ENCODE measurements at regions of chr2 and their contacts with region 1.

Region 1: GRCh38 chr2:198127627-198128026 is 323.2 kb downstream of the PLCL1 start:
- DNase-seq: peak; percentile 42
- CTCF ChIP-seq: peak; percentile 73

Region 2: GRCh38 chr2:197804049-197804757 is 323.4 kb before region 1 on chr2 and contains the start of gene PLCL1:
- CTCF ChIA-PET with region 1: interaction called, 19 read pairs
- POLR2A ChIA-PET with region 1: no interaction called
- DNase-seq: peak; percentile 91
- CTCF ChIP-seq: no peak

Region 3: GRCh38 chr2:197851451-197851850 is 276.2 kb before region 1 on chr2:
- CTCF ChIA-PET with region 1: interaction called, 63 read pairs
- POLR2A ChIA-PET with region 1: no interaction called
- DNase-seq: peak; percentile 18
- CTCF ChIP-seq: peak; percentile 30

Region 4: GRCh38 chr2:198116756-198117155 is 10.9 kb before region 1 on chr2:
- CTCF ChIA-PET with region 1: interaction called, 12 read pairs
- POLR2A ChIA-PET with region 1: no interaction called
- DNase-seq: no peak
- CTCF ChIP-seq: no peak

Region 5: DNA sequence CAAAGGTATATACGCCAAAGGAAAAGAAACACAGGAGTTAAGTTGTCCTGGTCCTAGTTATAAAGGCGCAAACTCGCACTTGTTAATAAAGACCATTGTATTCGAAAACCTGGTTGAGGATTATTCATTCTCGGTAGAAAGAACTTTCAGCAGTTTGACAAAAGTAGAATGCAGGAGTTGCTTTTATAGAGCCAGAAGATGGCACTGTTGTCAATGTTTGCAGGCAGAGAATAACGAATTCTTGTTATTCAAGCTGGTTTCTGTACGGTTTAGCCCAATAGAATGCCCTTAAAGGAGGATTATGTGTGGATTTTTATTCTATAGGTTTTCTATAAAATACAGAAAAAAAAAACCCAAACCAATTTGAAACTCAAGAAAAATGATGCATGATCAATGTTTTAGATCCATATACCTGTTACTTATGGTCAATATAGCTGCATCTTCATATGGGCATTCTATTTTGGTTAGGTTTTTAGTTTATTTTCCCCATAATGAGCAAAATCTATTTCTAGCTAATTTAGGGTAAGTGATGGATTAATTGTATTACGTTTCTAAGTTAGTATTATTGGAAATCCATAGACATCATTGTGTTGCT is 187.0 kb after region 1 on chr2:
- CTCF ChIA-PET with region 1: no interaction called
- POLR2A ChIA-PET with region 1: no interaction called
- DNase-seq: no peak
- CTCF ChIP-seq: peak; percentile 72